ENCODE measurements at regions of chr6 and their contacts with region 1.

Region 1: GRCh38 chr6:17971128-17972073 is 16.0 kb downstream of the KIF13A start:
- DNase-seq: peak in 1 of 3 donors; percentile 44
- ATAC-seq: peak; percentile 39 to 81
- H3K4me3 ChIP-seq: no peak overlapping the region
- H3K27ac ChIP-seq: peak overlapping the region; percentile 79
- H3K4me1 ChIP-seq: peaks cover 19% of the 10 kb centered on the region
- H3K27me3 ChIP-seq: no peaks in the 10 kb centered on the region

Region 2: DNA sequence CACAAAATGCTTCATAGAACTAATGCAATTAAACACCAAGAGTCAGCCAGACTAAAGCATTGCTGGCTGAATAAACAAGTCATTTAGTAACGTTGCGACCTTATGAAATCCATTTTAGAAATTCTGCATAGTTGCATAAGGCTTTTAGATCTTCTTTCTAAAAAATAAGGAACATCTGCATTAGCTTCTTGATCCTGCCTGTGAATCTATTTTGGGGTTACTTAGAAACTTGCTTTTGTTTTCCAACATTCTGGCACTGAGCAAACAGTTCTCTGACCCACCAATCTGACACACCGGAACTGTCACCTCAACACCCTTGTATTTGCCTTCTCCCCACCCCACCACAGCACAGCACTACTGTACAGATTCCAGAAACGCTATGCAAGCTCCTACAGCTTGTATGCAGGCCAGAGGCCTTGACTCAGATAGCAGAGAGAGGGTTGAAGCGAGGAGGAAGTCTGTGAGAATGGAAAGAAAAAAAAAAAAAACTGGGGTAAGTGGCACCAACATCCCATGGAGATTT is 39.0 kb before region 1 on chr6:
- intact Hi-C with region 1: loop called in 2 of 4 experiments (anchors 5 kb)
- DNase-seq: peak; percentile 59 to 74 (median 69)
- ATAC-seq: peak; percentile 94
- H3K4me3 ChIP-seq: no peak overlapping the region
- H3K27ac ChIP-seq: peak overlapping the region; percentile 70
- H3K4me1 ChIP-seq: peaks cover 17% of the 10 kb centered on the region
- H3K27me3 ChIP-seq: no peaks in the 10 kb centered on the region

Region 3: GRCh38 chr6:18207438-18207837 is 236.0 kb after region 1 on chr6:
- intact Hi-C with region 1: no loop called
- DNase-seq: no peak
- ATAC-seq: peak in 1 of 2 donors; percentile 33
- H3K4me3 ChIP-seq: no peak overlapping the region
- H3K27ac ChIP-seq: no peak overlapping the region
- H3K4me1 ChIP-seq: peaks cover 2% of the 10 kb centered on the region
- H3K27me3 ChIP-seq: no peaks in the 10 kb centered on the region